ENCODE measurements at regions of chr7 and their contacts with region 1.

Region 1: DNA sequence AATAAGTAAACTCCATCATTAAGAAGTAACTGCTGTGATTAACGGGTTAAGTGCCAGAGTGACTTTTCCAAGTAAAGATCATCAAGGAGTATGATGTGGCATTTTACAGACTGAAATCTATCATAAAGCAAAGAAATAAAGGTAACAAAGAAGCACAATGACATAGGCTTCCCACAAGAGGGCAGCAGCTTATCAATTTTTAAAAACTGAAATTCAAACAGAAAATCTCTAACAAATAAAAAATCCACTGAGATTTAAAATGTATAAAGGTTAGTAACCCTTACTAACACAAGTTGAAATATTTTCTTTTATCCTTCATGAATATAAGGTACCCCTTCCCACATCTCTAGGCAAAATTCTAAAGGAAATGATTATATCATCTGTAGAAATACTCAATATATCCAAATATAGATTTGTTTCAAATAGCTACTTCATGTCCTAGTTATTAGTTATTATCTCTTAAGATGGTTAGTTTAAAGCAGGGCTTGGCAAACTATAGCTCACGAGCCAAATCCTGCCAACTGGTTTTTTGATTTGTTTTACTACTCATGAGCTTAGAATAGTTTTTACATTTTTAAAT is 29.2 kb downstream of the FAM3C start:
- DNase-seq: peak in 6 of 9 donors; percentile 26 to 61 (median 57)
- ATAC-seq: peak; percentile 67
- H3K4me3 ChIP-seq: no peak overlapping the region
- H3K4me3 Mint-ChIP-seq: no peak overlapping the region
- H3K27ac ChIP-seq: no peak overlapping the region
- H3K27ac Mint-ChIP-seq: peak overlapping the region in 3 of 9 donors; percentile 45 to 69 (median 47)
- H3K4me1 ChIP-seq: no peaks in the 10 kb centered on the region
- H3K4me1 Mint-ChIP-seq: peaks cover 0 to 39% (median 4%) of the 10 kb centered on the region in 7 donors
- H3K27me3 ChIP-seq: no peaks in the 10 kb centered on the region
- H3K27me3 Mint-ChIP-seq: no peaks in the 10 kb centered on the region

Region 2: DNA sequence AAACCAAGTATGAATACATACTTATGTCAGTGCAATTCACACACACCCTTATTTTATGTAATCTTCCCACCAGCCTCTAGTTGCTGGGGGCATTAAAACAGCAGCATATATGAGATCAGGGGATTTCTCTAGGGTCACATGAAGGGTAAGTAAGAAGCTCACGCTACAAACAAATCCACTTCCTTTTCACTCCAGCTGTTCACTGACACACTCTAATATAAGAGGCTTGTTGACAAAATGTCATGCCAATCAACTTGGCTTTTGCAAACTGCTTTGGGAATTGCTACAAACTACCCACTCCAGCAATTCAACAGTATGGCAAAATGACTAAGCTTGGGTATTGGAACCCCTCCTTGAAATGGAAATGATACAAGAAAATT is 18.8 kb after region 1 on chr7:
- CTCF ChIA-PET with region 1: interaction called, 5 read pairs
- POLR2A ChIA-PET with region 1: no interaction called
- intact Hi-C with region 1: loop called in 1 of 2 experiments (anchors 1 kb)
- DNase-seq: peak in 3 of 9 donors; percentile 15 to 51 (median 39)
- ATAC-seq: peak; percentile 83
- H3K4me3 ChIP-seq: no peak overlapping the region
- H3K4me3 Mint-ChIP-seq: peak overlapping the region in 5 of 10 donors; percentile 23 to 47 (median 35)
- H3K27ac ChIP-seq: no peak overlapping the region
- H3K27ac Mint-ChIP-seq: peak overlapping the region in 4 of 9 donors; percentile 16 to 74 (median 32)
- H3K4me1 ChIP-seq: peaks cover 6 to 39% of the 10 kb centered on the region in 2 donors
- H3K4me1 Mint-ChIP-seq: peaks cover 25 to 84% (median 73%) of the 10 kb centered on the region in 7 donors
- H3K27me3 ChIP-seq: no peaks in the 10 kb centered on the region
- H3K27me3 Mint-ChIP-seq: no peaks in the 10 kb centered on the region

Region 3: GRCh38 chr7:121510296-121510695 is 143.4 kb after region 1 on chr7:
- CTCF ChIA-PET with region 1: interaction called, 5 read pairs
- POLR2A ChIA-PET with region 1: no interaction called
- intact Hi-C with region 1: loop called in 1 of 2 experiments (anchors 1 kb)
- DNase-seq: peak in 6 of 9 donors; percentile 2 to 27 (median 10)
- ATAC-seq: no peak
- H3K4me3 ChIP-seq: no peak overlapping the region
- H3K4me3 Mint-ChIP-seq: no peak overlapping the region
- H3K27ac ChIP-seq: no peak overlapping the region
- H3K27ac Mint-ChIP-seq: peak overlapping the region in 1 of 9 donors; percentile 3
- H3K4me1 ChIP-seq: no peaks in the 10 kb centered on the region
- H3K4me1 Mint-ChIP-seq: no peaks in the 10 kb centered on the region
- H3K27me3 ChIP-seq: no peaks in the 10 kb centered on the region
- H3K27me3 Mint-ChIP-seq: peaks cover 0 to 13% (median 6%) of the 10 kb centered on the region in 5 donors

Measured in naive thymus-derived CD4-positive, alpha-beta T cell (primary cell).